Activated CD4-positive, alpha-beta T cell treated with anti-CD3 and anti-CD28 coated beads for 36 hours (primary cell): ENCODE measurements at regions of chr5 and their contacts with region 1.

Region 1: GRCh38 chr5:123423278-123424149 is at the start of gene CEP120:
- DNase-seq: peak; percentile 98
- ATAC-seq: peak; percentile 97
- H3K4me3 Mint-ChIP-seq: no peak within 1 kb of the TSS
- H3K27ac Mint-ChIP-seq: no peak within 1 kb of the TSS
- H3K4me1 Mint-ChIP-seq: peaks cover 30% of the 10 kb centered on the region
- H3K27me3 Mint-ChIP-seq: no peaks in the 10 kb centered on the region
- total RNA-seq, gene CEP120: 29.5 to 32.5 TPM

Region 2: DNA sequence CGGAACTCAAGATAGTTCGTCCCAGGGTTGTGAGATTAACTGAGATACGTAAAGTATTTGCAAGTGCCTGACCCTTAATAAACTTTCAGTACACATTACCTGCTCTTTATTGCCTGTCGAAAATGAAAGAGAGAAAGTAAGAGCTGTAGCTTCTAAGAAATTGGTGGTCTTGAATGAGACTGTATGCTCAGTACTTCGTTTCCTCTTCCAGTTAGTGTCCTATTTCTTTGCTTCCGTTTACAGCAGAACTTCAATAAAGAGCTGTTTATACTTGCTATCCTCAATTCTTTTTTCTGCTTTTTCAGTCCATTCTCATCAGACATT is 1461.2 kb before region 1 on chr5:
- CTCF ChIA-PET with region 1: no interaction called
- POLR2A ChIA-PET with region 1: no interaction called
- intact Hi-C with region 1: loop called (anchors 2 to 10 kb)
- DNase-seq: no peak
- ATAC-seq: peak; percentile 31
- H3K4me3 Mint-ChIP-seq: peak overlapping the region; percentile 94
- H3K27ac Mint-ChIP-seq: peak overlapping the region; percentile 98
- H3K4me1 Mint-ChIP-seq: peaks cover 40% of the 10 kb centered on the region
- H3K27me3 Mint-ChIP-seq: peaks cover 4% of the 10 kb centered on the region

Region 3: DNA sequence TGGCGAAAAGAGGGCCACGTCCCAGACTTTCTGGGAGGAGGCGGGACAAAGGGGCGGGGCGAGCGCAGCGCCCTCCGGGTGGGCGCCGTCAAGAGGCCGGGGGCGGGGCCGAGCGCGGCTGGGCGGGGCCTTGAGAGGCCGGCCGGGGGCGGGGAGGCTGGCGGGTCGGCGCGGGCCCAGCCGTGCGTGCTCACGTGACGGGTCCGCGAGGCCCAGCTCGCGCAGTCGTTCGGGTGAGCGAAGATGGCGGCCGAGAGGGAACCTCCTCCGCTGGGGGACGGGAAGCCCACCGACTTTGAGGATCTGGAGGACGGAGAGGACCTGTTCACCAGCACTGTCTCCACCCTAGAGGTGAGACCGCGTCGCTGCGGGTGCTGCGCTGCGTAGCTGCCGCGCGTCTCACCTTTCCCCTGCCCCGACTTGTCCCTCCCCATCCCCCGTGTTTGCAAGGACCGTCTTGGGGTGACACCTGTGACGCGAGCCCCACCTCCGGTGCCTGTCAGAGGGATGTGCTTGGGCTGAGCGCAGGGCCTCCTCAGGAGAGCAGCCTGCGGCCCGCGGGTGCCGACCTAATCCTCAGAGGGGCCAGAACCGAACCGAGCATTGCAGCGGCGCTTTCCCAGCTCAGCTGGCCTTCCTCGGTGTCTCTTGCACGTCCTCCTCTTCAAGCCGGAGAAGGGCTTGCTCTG is 648.5 kb before region 1 on chr5 and contains the start of gene SNX2:
- CTCF ChIA-PET with region 1: no interaction called
- POLR2A ChIA-PET with region 1: no interaction called
- intact Hi-C with region 1: loop called in 1 of 2 experiments (anchors 2 kb)
- DNase-seq: peak; percentile 95
- ATAC-seq: peak; percentile 94
- H3K4me3 Mint-ChIP-seq: peak within 1 kb of the TSS; percentile 94
- H3K27ac Mint-ChIP-seq: peak within 1 kb of the TSS; percentile 91
- H3K4me1 Mint-ChIP-seq: peaks cover 30% of the 10 kb centered on the region
- H3K27me3 Mint-ChIP-seq: peaks cover under 1% of the 10 kb centered on the region
- total RNA-seq, gene SNX2: 50.2 to 56.0 TPM

Region 4: GRCh38 chr5:123433596-123433995 is 10.1 kb after region 1 on chr5:
- CTCF ChIA-PET with region 1: interaction called, 16 read pairs
- POLR2A ChIA-PET with region 1: interaction called, 19 read pairs
- intact Hi-C with region 1: loop called (anchors 1 kb)
- DNase-seq: no peak
- ATAC-seq: no peak
- H3K4me3 Mint-ChIP-seq: no peak overlapping the region
- H3K27ac Mint-ChIP-seq: no peak overlapping the region
- H3K4me1 Mint-ChIP-seq: peaks cover 17% of the 10 kb centered on the region
- H3K27me3 Mint-ChIP-seq: peaks cover 4% of the 10 kb centered on the region

Region 5: GRCh38 chr5:123450640-123451039 is 27.1 kb after region 1 on chr5:
- CTCF ChIA-PET with region 1: interaction called, 13 read pairs
- POLR2A ChIA-PET with region 1: interaction called, 20 read pairs
- intact Hi-C with region 1: loop called (anchors 1 kb)
- DNase-seq: no peak
- ATAC-seq: no peak
- H3K4me3 Mint-ChIP-seq: no peak overlapping the region
- H3K27ac Mint-ChIP-seq: no peak overlapping the region
- H3K4me1 Mint-ChIP-seq: peaks cover 33% of the 10 kb centered on the region
- H3K27me3 Mint-ChIP-seq: peaks cover 9% of the 10 kb centered on the region

Region 6: DNA sequence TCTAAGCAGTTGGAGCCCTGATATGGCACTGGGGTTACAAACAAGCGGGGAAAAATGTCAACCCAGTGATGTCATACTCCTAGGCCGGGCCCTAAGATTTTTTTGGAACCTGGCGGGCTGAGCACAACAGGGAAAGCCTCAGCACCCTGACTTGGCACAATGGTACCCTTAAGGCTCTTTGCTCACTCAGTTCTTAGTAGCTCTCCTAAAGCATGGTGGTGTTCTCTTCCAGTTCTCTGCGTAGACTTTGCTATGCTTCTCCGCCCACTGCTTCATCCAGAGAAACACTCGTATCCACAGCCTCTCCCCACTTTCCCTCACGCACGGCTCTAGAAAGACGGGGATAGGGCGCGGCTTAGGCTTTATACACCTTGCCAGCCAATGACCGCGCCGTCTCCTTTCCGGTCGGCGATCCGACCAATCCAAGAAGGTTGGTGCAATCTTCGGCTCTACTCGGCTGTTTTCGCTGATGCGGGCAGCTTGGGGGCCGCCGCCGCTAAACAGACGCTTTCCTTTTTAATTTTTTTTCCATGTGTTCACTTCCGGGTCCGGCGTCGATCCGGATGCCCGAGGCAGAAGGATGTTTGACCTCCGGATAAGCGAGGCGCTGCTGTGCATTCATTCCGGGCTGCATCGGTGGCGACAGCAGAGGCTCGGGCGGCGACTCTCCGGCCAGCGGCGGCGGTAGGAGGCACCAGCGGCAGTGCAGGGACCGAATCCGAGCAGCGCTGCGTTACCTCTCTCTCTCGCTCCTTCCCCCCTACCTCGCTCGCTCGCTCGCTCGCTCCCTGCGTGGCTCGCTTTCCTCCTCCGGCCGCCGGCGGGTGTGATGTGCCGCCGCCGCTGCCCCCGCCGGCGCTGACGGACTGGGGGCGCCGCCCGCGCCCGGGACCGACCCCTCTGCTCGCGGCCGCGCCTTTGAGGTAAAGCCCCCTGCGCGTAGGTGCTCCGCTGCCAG is 88.4 kb after region 1 on chr5 and contains the start of gene CSNK1G3:
- CTCF ChIA-PET with region 1: interaction called, 16 read pairs
- POLR2A ChIA-PET with region 1: interaction called, 55 read pairs
- intact Hi-C with region 1: loop called (anchors 1 kb)
- DNase-seq: peak; percentile 96
- ATAC-seq: peak; percentile 94
- H3K4me3 Mint-ChIP-seq: peak within 1 kb of the TSS; percentile 92
- H3K27ac Mint-ChIP-seq: peak within 1 kb of the TSS; percentile 97
- H3K4me1 Mint-ChIP-seq: peaks cover 45% of the 10 kb centered on the region
- H3K27me3 Mint-ChIP-seq: peaks cover 4% of the 10 kb centered on the region
- total RNA-seq, gene CSNK1G3: 30.6 to 31.5 TPM

Region 7: GRCh38 chr5:123610665-123611405 is 187.3 kb after region 1 on chr5:
- CTCF ChIA-PET with region 1: interaction called, 15 read pairs
- POLR2A ChIA-PET with region 1: no interaction called
- intact Hi-C with region 1: loop called (anchors 1 kb)
- DNase-seq: peak; percentile 14
- ATAC-seq: peak; percentile 39
- H3K4me3 Mint-ChIP-seq: no peak overlapping the region
- H3K27ac Mint-ChIP-seq: no peak overlapping the region
- H3K4me1 Mint-ChIP-seq: peaks cover 11% of the 10 kb centered on the region
- H3K27me3 Mint-ChIP-seq: no peaks in the 10 kb centered on the region